ENCODE measurements at regions of chr15 and their contacts with region 1.

Region 1: GRCh38 chr15:38853608-38854007 is 289.0 kb upstream of the RASGRP1 start:
- DNase-seq: peak; percentile 75
- ATAC-seq: peak; percentile 99
- H3K4me3 Mint-ChIP-seq: no peak overlapping the region
- H3K27ac Mint-ChIP-seq: no peak overlapping the region
- H3K4me1 Mint-ChIP-seq: 0 out of 2 replicates have a peak, but pooled peaks cover 4% of the 10 kb centered on the region
- H3K27me3 Mint-ChIP-seq: no peaks in the 10 kb centered on the region
- CTCF ChIP-seq: no peak

Region 2: DNA sequence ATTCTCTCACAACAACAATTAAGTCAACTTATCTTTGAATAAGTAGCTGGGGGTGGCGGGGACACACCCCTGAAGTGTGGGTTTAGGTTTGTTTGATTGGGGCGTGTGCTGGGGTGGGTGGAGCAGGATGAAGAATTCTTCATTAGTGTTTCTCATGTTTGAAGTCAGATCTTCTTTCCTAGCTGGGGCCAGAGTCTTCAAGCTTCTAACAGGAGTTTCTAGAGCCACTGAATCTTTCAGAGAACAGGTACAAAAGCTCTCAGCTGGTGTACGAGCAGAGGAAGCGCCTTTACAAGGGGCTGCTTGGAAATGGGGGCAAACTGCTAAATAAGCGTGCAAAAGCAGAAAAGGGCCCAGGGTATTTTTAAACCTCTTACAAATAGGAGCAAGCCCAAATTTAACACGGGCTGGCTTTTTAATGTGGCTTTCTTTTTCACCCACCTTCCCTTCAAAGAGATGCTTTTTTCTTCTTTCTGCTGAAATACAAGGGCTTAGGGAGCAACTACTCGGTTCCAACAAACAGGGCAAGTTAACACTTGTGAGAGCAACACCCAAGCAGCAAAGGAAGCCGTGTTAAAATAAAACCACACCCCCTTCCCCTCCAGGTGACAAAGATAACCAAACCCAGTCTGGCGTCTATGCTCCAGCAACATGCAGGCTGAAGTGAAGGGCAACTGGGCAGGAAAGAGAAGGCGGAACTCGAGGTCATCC is 202.1 kb before region 1 on chr15:
- CTCF ChIA-PET with region 1: no interaction called
- POLR2A ChIA-PET with region 1: no interaction called
- DNase-seq: no peak
- ATAC-seq: no peak
- H3K4me3 Mint-ChIP-seq: no peak overlapping the region
- H3K27ac Mint-ChIP-seq: no peak overlapping the region
- H3K4me1 Mint-ChIP-seq: peaks cover 19% of the 10 kb centered on the region
- H3K27me3 Mint-ChIP-seq: no peaks in the 10 kb centered on the region; the same call in 1 of the 2 replicates
- CTCF ChIP-seq: no peak

Region 3: DNA sequence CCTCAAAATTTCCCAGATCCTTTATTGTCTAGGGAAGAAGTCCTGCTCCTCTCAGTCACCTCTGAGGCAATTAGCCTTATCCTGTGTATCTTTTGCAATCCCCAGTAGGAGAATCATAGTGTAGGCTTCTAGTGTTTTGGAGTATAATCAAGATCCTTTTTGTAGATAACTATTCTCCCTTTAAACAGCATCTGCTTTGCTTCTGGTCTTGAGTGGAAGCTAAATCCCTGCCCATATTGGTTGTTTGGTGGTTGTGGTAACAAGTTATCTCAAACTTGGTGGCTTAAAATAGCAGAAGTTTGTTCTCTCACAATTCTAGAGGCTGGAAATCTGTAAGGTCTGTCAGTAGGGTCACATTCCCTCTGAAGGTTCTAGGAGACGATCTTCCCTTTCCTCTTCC is 71.5 kb before region 1 on chr15:
- CTCF ChIA-PET with region 1: no interaction called
- POLR2A ChIA-PET with region 1: no interaction called
- DNase-seq: no peak
- ATAC-seq: no peak
- H3K4me3 Mint-ChIP-seq: no peak overlapping the region
- H3K27ac Mint-ChIP-seq: no peak overlapping the region
- H3K4me1 Mint-ChIP-seq: no peaks in the 10 kb centered on the region
- H3K27me3 Mint-ChIP-seq: no peaks in the 10 kb centered on the region
- CTCF ChIP-seq: no peak

Region 4: GRCh38 chr15:38864827-38865581 is 11.4 kb after region 1 on chr15:
- CTCF ChIA-PET with region 1: interaction called, 14 read pairs
- POLR2A ChIA-PET with region 1: no interaction called
- DNase-seq: no peak
- ATAC-seq: no peak
- H3K4me3 Mint-ChIP-seq: no peak overlapping the region
- H3K27ac Mint-ChIP-seq: no peak overlapping the region
- H3K4me1 Mint-ChIP-seq: 0 out of 2 replicates have a peak, but pooled peaks cover 4% of the 10 kb centered on the region
- H3K27me3 Mint-ChIP-seq: no peaks in the 10 kb centered on the region
- CTCF ChIP-seq: no peak

Region 5: DNA sequence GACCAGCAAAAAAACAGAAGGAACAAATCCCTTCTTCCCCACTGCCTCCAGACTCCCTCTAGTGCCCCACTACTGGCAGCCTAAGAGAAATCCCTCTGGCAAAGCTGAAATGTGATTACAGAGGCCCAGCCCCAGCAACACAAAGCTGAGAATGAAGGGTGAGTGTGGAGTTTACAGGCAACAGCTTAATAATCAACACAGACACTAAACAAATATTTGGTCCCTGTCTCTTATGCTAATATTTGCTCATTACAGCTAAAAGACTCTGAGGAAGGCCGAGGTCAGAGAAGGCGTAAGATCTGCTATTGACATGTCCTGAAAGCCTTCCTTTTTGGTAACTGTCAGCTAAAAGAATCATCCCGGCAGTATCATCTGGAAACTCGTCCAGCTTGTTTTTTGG is 19.6 kb after region 1 on chr15:
- CTCF ChIA-PET with region 1: interaction called, 10 read pairs
- POLR2A ChIA-PET with region 1: no interaction called
- DNase-seq: peak; percentile 16
- ATAC-seq: peak; percentile 79
- H3K4me3 Mint-ChIP-seq: no peak overlapping the region
- H3K27ac Mint-ChIP-seq: no peak overlapping the region
- H3K4me1 Mint-ChIP-seq: peaks cover 16% of the 10 kb centered on the region
- H3K27me3 Mint-ChIP-seq: no peaks in the 10 kb centered on the region
- CTCF ChIP-seq: no peak